ENCODE measurements at regions of chr6 and their contacts with region 1.

Region 1: GRCh38 chr6:118565311-118565960 is 17.3 kb downstream of the PLN start:
- DNase-seq: peak; percentile 48
- ATAC-seq: peak; percentile 87
- H3K4me3 Mint-ChIP-seq: no peak overlapping the region
- H3K27ac Mint-ChIP-seq: no peak overlapping the region
- H3K4me1 Mint-ChIP-seq: peaks cover 7% of the 10 kb centered on the region
- H3K27me3 Mint-ChIP-seq: no peaks in the 10 kb centered on the region

Region 2: DNA sequence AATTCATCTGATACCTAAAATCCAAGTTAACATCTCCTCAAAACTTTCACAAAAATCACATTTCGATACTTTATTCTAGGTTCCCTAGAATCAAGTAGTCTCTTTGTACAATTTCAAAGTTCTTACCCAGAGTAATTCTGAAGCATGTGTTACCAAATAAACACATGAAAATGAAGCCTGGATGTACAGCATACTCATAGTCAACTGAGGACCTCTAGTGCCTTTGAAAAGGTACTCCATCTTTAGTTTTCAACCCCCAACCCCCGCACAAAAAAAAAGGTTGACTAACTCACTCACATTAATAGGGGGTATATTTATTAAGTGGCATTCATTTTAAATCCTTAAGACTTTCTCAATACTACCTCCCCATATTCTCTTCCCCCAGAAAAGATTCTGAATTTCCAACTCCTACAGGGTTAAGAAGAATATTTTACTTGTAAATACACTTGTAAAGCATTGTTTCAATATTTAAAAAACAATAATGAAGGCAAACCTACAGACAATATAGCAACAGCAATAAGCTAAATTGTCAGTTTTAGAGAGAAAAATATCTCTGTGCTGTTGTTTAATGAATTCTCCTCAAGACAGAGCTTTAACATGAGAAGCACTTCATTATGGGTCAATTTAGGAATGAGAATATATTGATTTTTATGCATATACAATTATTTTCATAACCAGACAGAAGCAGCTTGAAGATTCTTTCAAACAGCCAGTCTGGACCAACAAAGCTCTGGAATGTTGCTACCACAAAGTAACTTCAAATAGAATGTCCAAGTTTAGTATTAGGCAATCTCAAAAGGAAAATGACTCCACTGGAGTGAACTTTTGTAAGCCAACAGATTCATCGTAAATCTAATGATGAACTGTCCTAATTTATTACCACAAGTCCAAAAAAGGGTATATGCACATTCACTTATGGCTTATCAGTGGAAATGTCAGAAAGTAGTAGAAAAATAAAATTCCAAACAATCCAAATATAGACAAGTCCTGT is 14.1 kb before region 1 on chr6:
- CTCF ChIA-PET with region 1: interaction called, 23 read pairs
- POLR2A ChIA-PET with region 1: no interaction called
- DNase-seq: no peak
- ATAC-seq: peak; percentile 85
- H3K4me3 Mint-ChIP-seq: no peak overlapping the region
- H3K27ac Mint-ChIP-seq: no peak overlapping the region
- H3K4me1 Mint-ChIP-seq: peaks cover 23% of the 10 kb centered on the region
- H3K27me3 Mint-ChIP-seq: no peaks in the 10 kb centered on the region

Region 3: DNA sequence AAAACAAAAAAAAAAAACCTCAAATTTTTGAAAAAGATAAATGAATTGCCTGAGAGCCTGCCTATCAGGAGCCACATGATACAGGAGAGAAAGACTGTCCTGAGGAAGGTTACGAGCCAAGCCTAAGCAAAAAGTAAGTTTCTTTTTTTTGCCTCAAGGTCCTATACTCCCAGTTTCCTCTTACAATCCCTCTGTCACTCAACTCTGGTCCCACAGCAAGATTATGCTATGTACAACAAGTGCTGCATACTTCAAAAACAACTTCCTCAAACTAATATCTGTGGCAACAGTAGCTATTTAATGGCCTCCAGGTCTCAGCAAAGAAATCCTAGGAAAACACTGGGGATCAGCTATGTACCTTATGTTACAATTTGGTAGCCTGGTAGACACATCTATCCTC is 29.4 kb after region 1 on chr6:
- CTCF ChIA-PET with region 1: interaction called, 14 read pairs
- POLR2A ChIA-PET with region 1: no interaction called
- DNase-seq: no peak
- ATAC-seq: no peak
- H3K4me3 Mint-ChIP-seq: no peak overlapping the region
- H3K27ac Mint-ChIP-seq: no peak overlapping the region
- H3K4me1 Mint-ChIP-seq: no peaks in the 10 kb centered on the region
- H3K27me3 Mint-ChIP-seq: no peaks in the 10 kb centered on the region

Region 4: GRCh38 chr6:118635909-118636735 is 70.7 kb after region 1 on chr6:
- CTCF ChIA-PET with region 1: interaction called, 15 read pairs
- POLR2A ChIA-PET with region 1: no interaction called
- DNase-seq: no peak
- ATAC-seq: no peak
- H3K4me3 Mint-ChIP-seq: no peak overlapping the region
- H3K27ac Mint-ChIP-seq: no peak overlapping the region
- H3K4me1 Mint-ChIP-seq: peaks cover 31% of the 10 kb centered on the region
- H3K27me3 Mint-ChIP-seq: no peaks in the 10 kb centered on the region

Region 5: GRCh38 chr6:118800394-118801071 is 235.1 kb after region 1 on chr6:
- CTCF ChIA-PET with region 1: interaction called, 36 read pairs
- POLR2A ChIA-PET with region 1: interaction called, 4 read pairs
- DNase-seq: peak; percentile 92
- ATAC-seq: peak; percentile 95
- H3K4me3 Mint-ChIP-seq: peak overlapping the region; percentile 45
- H3K27ac Mint-ChIP-seq: peak overlapping the region; percentile 81
- H3K4me1 Mint-ChIP-seq: peaks cover 40% of the 10 kb centered on the region
- H3K27me3 Mint-ChIP-seq: no peaks in the 10 kb centered on the region

Region 6: GRCh38 chr6:119110601-119111548 is 545.4 kb after region 1 on chr6:
- CTCF ChIA-PET with region 1: interaction called, 16 read pairs
- POLR2A ChIA-PET with region 1: no interaction called
- DNase-seq: peak; percentile 61
- ATAC-seq: peak; percentile 79
- H3K4me3 Mint-ChIP-seq: no peak overlapping the region
- H3K27ac Mint-ChIP-seq: no peak overlapping the region
- H3K4me1 Mint-ChIP-seq: peaks cover 14% of the 10 kb centered on the region
- H3K27me3 Mint-ChIP-seq: no peaks in the 10 kb centered on the region

Measured in activated CD8-positive, alpha-beta T cell treated with anti-CD3 and anti-CD28 coated beads, Interleukin-2, amount 10 ng/mL, durations not matched to agents 7 days and 5 days (primary cell).